GM12878 (cell line): ENCODE measurements at regions of chr7 and their contacts with region 1.

Region 1: GRCh38 chr7:40525764-40526163 is 391.0 kb downstream of the SUGCT start:
- DNase-seq: no peak
- ATAC-seq: no peak
- H3K4me3 ChIP-seq: no peak overlapping the region
- H3K27ac ChIP-seq: no peak overlapping the region
- H3K4me1 ChIP-seq: no peaks in the 10 kb centered on the region
- H3K27me3 ChIP-seq: no peaks in the 10 kb centered on the region
- CTCF ChIP-seq: no peak
- EP300 ChIP-seq: no peak
- POLR2A ChIP-seq: no peak
- RAD21 ChIP-seq: no peak

Region 2: GRCh38 chr7:40014376-40014775 is 511.4 kb before region 1 on chr7:
- CTCF ChIA-PET with region 1: no interaction called
- POLR2A ChIA-PET with region 1: no interaction called
- RAD21 ChIA-PET with region 1: interaction called, 4 read pairs
- SMC1A ChIA-PET with region 1: interaction called, 3 read pairs
- in situ Hi-C with region 1: loop called (anchors 5 kb)
- intact Hi-C with region 1: no loop called
- DNase-seq: no peak
- ATAC-seq: no peak
- H3K4me3 ChIP-seq: no peak overlapping the region
- H3K27ac ChIP-seq: no peak overlapping the region
- H3K4me1 ChIP-seq: peaks cover 11% of the 10 kb centered on the region
- H3K27me3 ChIP-seq: no peaks in the 10 kb centered on the region
- CTCF ChIP-seq: no peak
- EP300 ChIP-seq: no peak
- POLR2A ChIP-seq: no peak
- RAD21 ChIP-seq: no peak